HCT116 (cell line): ENCODE measurements at regions of chr7 and their contacts with region 1.

Region 1: GRCh38 chr7:139771001-139771970 is 6.5 kb downstream of the HIPK2 start:
- DNase-seq: peak; percentile 93
- ATAC-seq: peak; percentile 83
- H3K4me3 ChIP-seq: peak overlapping the region; percentile 7 to 23
- H3K27ac ChIP-seq: peak overlapping the region; percentile 80
- H3K4me1 ChIP-seq: peaks cover 48 to 68% of the 10 kb centered on the region in 2 experiments
- H3K27me3 ChIP-seq: no peaks in the 10 kb centered on the region
- CTCF ChIP-seq: no peak
- POLR2A ChIP-seq: no peak
- RAD21 ChIP-seq: peak; percentile 15; the same call in 1 of the 2 replicates

Region 2: DNA sequence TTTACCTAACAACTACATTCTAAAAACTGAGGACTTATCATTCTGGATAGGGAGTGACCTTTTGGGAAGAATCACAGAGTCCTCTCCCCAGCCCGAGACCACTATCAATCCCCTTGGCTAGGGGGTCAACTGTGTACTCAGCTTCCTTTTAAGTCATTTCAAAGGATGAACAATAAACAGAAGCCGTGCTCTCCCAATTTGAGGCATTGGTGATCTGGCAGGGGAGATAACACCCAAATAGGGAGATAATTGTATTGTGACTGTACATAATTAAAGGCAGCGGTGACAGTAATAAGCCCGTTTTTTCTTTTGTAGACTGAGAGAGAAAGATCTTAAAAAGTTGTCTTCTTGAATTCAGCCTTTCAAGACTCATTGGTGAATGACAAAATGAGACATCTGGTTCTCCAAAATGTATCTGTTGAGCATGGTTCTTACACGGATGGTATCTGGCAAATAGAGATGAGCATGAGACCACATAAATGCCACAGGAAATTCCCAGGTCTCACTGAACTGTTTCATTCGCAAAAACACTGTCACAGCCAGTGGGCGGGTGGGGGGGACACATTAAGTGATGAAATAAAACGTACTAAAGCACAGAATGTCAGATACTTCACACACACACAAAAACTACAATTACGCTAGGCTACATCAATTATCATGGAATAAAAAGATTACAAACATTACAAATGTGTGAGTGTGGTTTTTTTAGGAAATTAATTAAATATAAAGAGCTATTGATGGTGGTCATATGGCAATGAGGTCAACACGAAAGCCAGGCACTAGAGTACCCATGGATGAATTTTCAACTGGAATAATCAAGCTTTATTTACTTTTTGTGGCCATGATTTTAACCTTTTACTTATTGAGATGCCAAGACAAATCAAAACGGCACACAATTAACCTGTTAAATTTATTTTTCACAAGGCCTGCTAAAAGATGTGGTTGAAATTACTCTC is 101.9 kb before region 1 on chr7:
- CTCF ChIA-PET with region 1: no interaction called
- POLR2A ChIA-PET with region 1: no interaction called
- RAD21 ChIA-PET with region 1: no interaction called
- intact Hi-C with region 1: loop called (anchors 5 kb)
- DNase-seq: no peak
- ATAC-seq: no peak
- H3K4me3 ChIP-seq: no peak overlapping the region
- H3K27ac ChIP-seq: no peak overlapping the region
- H3K4me1 ChIP-seq: peaks cover 12 to 57% of the 10 kb centered on the region in 2 experiments
- H3K27me3 ChIP-seq: no peaks in the 10 kb centered on the region
- CTCF ChIP-seq: no peak
- POLR2A ChIP-seq: no peak
- RAD21 ChIP-seq: no peak

Region 3: DNA sequence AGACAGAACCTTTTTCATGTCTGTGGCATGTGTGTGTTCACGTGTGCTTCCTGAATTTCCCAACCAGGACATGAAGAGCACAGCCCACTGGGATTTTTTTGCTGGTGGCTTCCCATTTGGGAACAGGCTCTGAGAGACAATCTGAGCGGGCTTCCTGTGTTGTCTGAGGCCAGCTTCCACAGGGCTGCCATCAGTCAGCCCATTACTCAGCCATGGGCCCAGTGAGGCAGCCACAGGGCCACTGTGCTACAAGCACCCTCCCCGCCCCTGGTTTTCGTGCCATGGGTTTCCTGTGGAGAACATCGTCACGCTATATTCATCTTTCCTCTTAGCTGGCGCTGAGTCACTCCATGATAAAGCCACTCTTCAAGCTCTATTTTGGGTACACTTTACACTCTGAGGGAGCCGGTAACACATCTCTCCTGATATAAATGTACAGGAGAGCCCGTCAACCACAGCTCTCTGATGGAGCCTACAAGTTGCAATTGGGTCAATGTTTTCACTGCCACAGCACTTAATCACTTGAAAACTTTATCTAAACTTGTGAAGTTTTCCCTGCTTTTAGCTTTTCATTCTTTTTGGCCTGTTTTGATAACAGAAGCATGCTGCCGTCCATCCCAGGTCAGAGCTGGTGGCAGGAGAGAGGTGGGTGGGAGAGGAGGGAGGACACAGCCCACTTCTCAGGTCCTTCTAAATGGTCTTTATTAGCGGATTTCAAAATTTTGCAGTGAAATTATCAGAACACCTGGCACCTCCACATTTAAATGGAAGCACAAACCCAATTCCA is 90.4 kb before region 1 on chr7:
- CTCF ChIA-PET with region 1: no interaction called
- POLR2A ChIA-PET with region 1: interaction called, 4 read pairs
- RAD21 ChIA-PET with region 1: no interaction called
- intact Hi-C with region 1: loop called (anchors 2 kb)
- DNase-seq: peak; percentile 92
- ATAC-seq: peak; percentile 72
- H3K4me3 ChIP-seq: peak overlapping the region; percentile 13 to 47; a peak in 3 of 4 replicates
- H3K27ac ChIP-seq: peak overlapping the region; percentile 87
- H3K4me1 ChIP-seq: peaks cover 45 to 67% of the 10 kb centered on the region in 2 experiments
- H3K27me3 ChIP-seq: no peaks in the 10 kb centered on the region
- CTCF ChIP-seq: no peak
- POLR2A ChIP-seq: no peak
- RAD21 ChIP-seq: 0 out of 2 replicates have a peak, but pooled peaks have one; percentile 31